ENCODE measurements at regions of chr9 and their contacts with region 1.

Region 1: DNA sequence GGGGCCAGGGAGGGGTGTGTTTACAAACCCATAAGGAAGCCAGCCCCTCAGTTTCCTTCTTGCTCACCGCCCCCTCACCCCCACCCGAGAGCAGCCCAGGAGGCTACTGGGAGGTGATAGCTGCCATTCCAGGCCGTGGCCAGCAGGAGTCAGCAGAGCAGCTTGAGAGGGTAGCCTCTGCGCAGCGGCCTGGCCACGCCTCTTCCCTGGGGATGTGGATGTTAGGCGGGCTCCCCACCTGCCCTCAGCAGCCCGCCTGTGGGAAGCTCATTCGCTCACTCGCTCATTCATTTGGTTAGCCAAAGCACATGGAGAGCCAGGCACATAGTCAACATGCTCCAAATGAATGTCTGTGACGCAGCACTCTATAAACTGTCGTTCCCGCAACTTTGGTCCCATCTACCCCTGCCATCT is 6.1 kb upstream of the DPM2 start:
- DNase-seq: peak; percentile 49 to 87 (median 78)
- ATAC-seq: peak; percentile 85
- H3K4me3 ChIP-seq: no peak overlapping the region
- H3K4me3 Mint-ChIP-seq: no peak overlapping the region
- H3K27ac ChIP-seq: no peak overlapping the region
- H3K27ac Mint-ChIP-seq: peak overlapping the region; percentile 89
- H3K4me1 ChIP-seq: peaks cover 39% of the 10 kb centered on the region
- H3K4me1 Mint-ChIP-seq: peaks cover 35% of the 10 kb centered on the region
- H3K27me3 ChIP-seq: no peaks in the 10 kb centered on the region
- H3K27me3 Mint-ChIP-seq: no peaks in the 10 kb centered on the region
- CTCF ChIP-seq: peak; percentile 83

Region 2: GRCh38 chr9:127930231-127931091 is 13.3 kb before region 1 on chr9 and contains the start of gene PIP5KL1:
- CTCF ChIA-PET with region 1: interaction called, 34 read pairs
- POLR2A ChIA-PET with region 1: interaction called, 4 read pairs
- intact Hi-C with region 1: no loop called
- DNase-seq: peak; percentile 45 to 83 (median 68)
- ATAC-seq: peak; percentile 60
- H3K4me3 ChIP-seq: peak within 1 kb of the TSS; percentile 40 to 53
- H3K4me3 Mint-ChIP-seq: peak within 1 kb of the TSS; percentile 69
- H3K27ac ChIP-seq: no peak within 1 kb of the TSS
- H3K27ac Mint-ChIP-seq: peak within 1 kb of the TSS; percentile 71
- H3K4me1 ChIP-seq: peaks cover 36% of the 10 kb centered on the region
- H3K4me1 Mint-ChIP-seq: peaks cover 35% of the 10 kb centered on the region
- H3K27me3 ChIP-seq: peaks cover 0 to 5% of the 10 kb centered on the region in 2 experiments
- H3K27me3 Mint-ChIP-seq: no peaks in the 10 kb centered on the region
- CTCF ChIP-seq: no peak
- total RNA-seq, gene PIP5KL1: 5.1 to 7.4 TPM

Region 3: DNA sequence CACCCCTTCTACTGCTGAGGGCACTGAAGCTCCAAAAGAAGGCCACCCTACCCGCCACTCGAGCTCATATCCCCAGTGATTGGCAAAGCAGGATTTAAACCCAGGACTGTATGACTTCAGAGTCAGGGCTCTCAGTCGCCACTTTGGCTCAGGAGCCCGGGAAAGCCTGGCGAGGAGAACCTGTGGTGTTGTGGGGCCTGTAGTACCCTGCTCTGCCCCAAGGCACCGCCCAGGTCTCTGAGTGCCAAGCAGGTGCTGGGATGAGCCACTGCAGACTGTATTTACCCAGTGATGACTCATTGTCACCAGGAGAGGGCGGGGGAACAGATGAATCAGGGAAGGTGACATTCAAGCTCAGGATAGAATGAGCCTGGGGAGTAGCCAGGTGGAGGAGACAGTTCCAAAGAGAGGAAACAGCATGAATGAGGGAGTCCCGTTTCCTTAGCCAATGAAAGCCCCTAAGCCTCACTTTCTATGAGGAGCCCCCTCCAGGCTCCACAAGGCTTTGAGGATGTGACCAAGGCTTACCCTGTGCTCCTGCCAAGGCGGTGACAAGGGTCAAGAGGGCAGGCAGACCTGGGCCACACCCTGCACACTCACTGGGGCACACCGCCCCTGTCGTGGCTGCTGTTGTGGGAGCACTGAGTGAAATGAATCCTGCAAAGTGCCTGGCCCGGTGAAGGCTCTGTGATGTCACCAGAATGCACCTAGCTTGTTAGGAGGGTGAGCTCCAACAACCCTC is 11.7 kb after region 1 on chr9:
- CTCF ChIA-PET with region 1: interaction called, 573 read pairs
- POLR2A ChIA-PET with region 1: interaction called, 10 read pairs
- intact Hi-C with region 1: no loop called
- DNase-seq: peak; percentile 41 to 89 (median 82)
- ATAC-seq: peak; percentile 87
- H3K4me3 ChIP-seq: peak overlapping the region; percentile 4 to 21
- H3K4me3 Mint-ChIP-seq: peak overlapping the region; percentile 68
- H3K27ac ChIP-seq: peak overlapping the region; percentile 3 to 17
- H3K27ac Mint-ChIP-seq: peak overlapping the region; percentile 91
- H3K4me1 ChIP-seq: peaks cover 97% of the 10 kb centered on the region
- H3K4me1 Mint-ChIP-seq: peaks cover 85% of the 10 kb centered on the region
- H3K27me3 ChIP-seq: no peaks in the 10 kb centered on the region
- H3K27me3 Mint-ChIP-seq: no peaks in the 10 kb centered on the region
- CTCF ChIP-seq: peak; percentile 77

Region 4: DNA sequence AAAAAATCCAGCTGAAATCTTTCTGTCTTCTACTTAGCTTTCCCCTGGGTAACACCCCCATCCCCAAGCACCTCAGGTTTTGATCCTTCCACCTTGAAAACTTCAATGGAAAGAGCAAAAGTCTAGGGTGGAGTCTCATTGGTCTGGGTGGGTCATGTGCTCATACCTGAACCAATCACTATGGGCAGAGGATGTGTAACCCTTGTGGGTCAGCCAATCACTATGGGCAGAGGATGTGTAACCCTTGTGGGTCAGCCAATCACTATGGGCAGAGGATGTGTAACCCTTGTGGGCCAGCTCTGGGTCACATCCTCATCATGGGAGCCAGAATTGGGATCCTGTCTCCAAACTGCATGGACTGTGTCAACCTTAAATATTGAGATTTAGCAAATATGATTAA is 104.9 kb after region 1 on chr9:
- CTCF ChIA-PET with region 1: interaction called, 16 read pairs
- POLR2A ChIA-PET with region 1: no interaction called
- intact Hi-C with region 1: no loop called
- DNase-seq: no peak
- ATAC-seq: peak; percentile 56
- H3K4me3 ChIP-seq: no peak overlapping the region
- H3K4me3 Mint-ChIP-seq: no peak overlapping the region
- H3K27ac ChIP-seq: no peak overlapping the region
- H3K27ac Mint-ChIP-seq: no peak overlapping the region
- H3K4me1 ChIP-seq: no peaks in the 10 kb centered on the region
- H3K4me1 Mint-ChIP-seq: no peaks in the 10 kb centered on the region
- H3K27me3 ChIP-seq: no peaks in the 10 kb centered on the region
- H3K27me3 Mint-ChIP-seq: no peaks in the 10 kb centered on the region
- CTCF ChIP-seq: no peak

Region 5: GRCh38 chr9:128094166-128094967 is 150.6 kb after region 1 on chr9:
- CTCF ChIA-PET with region 1: interaction called, 34 read pairs
- POLR2A ChIA-PET with region 1: no interaction called
- intact Hi-C with region 1: no loop called
- DNase-seq: peak in 7 of 9 experiments; percentile 38 to 82 (median 62)
- ATAC-seq: peak; percentile 60
- H3K4me3 ChIP-seq: no peak overlapping the region
- H3K4me3 Mint-ChIP-seq: peak overlapping the region; percentile 66
- H3K27ac ChIP-seq: peak overlapping the region; percentile 57 to 74
- H3K27ac Mint-ChIP-seq: peak overlapping the region; percentile 93
- H3K4me1 ChIP-seq: peaks cover 75% of the 10 kb centered on the region
- H3K4me1 Mint-ChIP-seq: peaks cover 80% of the 10 kb centered on the region
- H3K27me3 ChIP-seq: no peaks in the 10 kb centered on the region
- H3K27me3 Mint-ChIP-seq: no peaks in the 10 kb centered on the region
- CTCF ChIP-seq: no peak

Region 6: DNA sequence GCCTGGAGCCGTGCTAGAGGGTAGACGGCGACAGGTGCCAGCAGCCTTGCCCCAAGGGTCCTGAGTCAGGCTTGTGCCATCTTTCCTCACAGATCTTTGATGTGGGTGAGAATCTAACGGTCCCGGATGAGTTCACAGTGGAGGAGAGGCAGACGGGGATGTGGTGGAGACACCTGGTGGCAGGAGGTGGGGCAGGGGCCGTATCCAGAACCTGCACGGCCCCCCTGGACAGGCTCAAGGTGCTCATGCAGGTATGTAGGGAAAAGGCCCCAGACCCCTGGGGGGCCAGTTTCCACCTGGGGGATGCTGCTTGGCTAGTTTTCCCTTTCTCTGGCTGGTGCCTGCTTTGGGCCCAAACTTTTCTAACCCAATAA is 159.8 kb after region 1 on chr9:
- CTCF ChIA-PET with region 1: interaction called, 17 read pairs
- POLR2A ChIA-PET with region 1: interaction called, 3 read pairs
- intact Hi-C with region 1: loop called in 1 of 2 experiments (anchors 1 kb)
- DNase-seq: peak in 7 of 9 experiments; percentile 16 to 70 (median 51)
- ATAC-seq: peak; percentile 63
- H3K4me3 ChIP-seq: no peak overlapping the region
- H3K4me3 Mint-ChIP-seq: no peak overlapping the region
- H3K27ac ChIP-seq: peak overlapping the region in 1 of 2 experiments; percentile 6
- H3K27ac Mint-ChIP-seq: peak overlapping the region; percentile 67
- H3K4me1 ChIP-seq: peaks cover 68% of the 10 kb centered on the region
- H3K4me1 Mint-ChIP-seq: peaks cover 55% of the 10 kb centered on the region
- H3K27me3 ChIP-seq: no peaks in the 10 kb centered on the region
- H3K27me3 Mint-ChIP-seq: no peaks in the 10 kb centered on the region
- CTCF ChIP-seq: peak; percentile 29

Region 7: DNA sequence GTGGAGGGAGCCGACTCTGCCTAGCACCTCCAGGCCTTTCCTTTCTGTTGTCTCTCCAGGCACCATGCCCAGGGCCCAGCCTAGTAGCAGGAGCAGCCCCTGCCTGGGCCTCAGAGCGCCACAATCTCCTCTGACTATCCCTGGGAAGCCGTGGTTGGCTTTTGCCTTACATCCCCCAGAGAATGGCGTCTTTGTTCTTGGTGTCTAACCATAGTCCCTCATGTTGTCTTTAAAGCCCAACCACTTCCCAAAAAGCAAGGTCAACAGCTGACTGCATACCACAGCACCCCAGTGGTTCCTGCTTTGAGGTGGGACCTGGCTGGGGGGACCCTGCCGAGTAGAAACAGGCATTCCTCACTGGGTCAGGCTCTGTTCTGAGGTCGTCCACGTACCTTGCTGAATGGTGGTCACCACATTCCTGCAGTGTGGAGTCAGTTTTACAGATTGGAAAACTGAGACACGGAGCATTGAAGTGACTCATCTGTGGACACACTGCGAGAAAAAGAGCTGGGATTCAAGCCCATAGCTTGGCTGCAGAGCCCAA is 463.2 kb after region 1 on chr9:
- CTCF ChIA-PET with region 1: no interaction called
- POLR2A ChIA-PET with region 1: no interaction called
- intact Hi-C with region 1: no loop called
- DNase-seq: no peak
- ATAC-seq: no peak
- H3K4me3 ChIP-seq: no peak overlapping the region
- H3K4me3 Mint-ChIP-seq: no peak overlapping the region
- H3K27ac ChIP-seq: no peak overlapping the region
- H3K27ac Mint-ChIP-seq: no peak overlapping the region
- H3K4me1 ChIP-seq: no peaks in the 10 kb centered on the region
- H3K4me1 Mint-ChIP-seq: no peaks in the 10 kb centered on the region
- H3K27me3 ChIP-seq: peaks cover 0 to 2% of the 10 kb centered on the region in 2 experiments
- H3K27me3 Mint-ChIP-seq: peaks cover 34% of the 10 kb centered on the region
- CTCF ChIP-seq: no peak

Region 8: GRCh38 chr9:128470560-128470959 is 526.8 kb after region 1 on chr9:
- CTCF ChIA-PET with region 1: no interaction called
- POLR2A ChIA-PET with region 1: no interaction called
- intact Hi-C with region 1: no loop called
- DNase-seq: peak in 5 of 9 experiments; percentile 10 to 67 (median 51)
- ATAC-seq: peak; percentile 65
- H3K4me3 ChIP-seq: no peak overlapping the region
- H3K4me3 Mint-ChIP-seq: no peak overlapping the region
- H3K27ac ChIP-seq: no peak overlapping the region
- H3K27ac Mint-ChIP-seq: no peak overlapping the region
- H3K4me1 ChIP-seq: peaks cover 10% of the 10 kb centered on the region
- H3K4me1 Mint-ChIP-seq: peaks cover 3% of the 10 kb centered on the region
- H3K27me3 ChIP-seq: no peaks in the 10 kb centered on the region
- H3K27me3 Mint-ChIP-seq: no peaks in the 10 kb centered on the region
- CTCF ChIP-seq: no peak

Measured in CD8-positive, alpha-beta T cell (primary cell).